ENCODE measurements at regions of chr18 and their contacts with region 1.

Region 1: DNA sequence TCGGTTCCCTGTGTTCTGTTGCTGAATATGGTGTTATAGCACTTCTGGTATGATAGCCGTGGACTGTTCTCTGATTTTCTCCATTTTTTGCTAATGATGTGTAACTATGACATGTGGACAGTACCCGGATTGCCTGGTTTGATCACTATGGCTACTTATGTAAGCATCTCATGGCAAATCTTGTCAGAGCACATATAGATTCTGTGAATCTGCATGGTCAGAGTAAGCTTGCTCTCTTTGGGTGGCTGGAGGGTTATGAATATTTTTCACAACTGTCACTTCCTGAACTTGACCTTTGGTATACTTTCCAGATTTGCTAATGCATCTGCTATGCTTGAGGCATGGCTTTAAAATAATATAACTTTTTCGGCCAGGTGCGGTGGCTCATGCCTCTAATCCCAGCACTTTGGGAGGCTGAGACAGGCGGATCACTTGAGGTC is 36.8 kb upstream of the ATP8B1 start:
- DNase-seq: peak; percentile 65
- H3K4me3 ChIP-seq: no peak overlapping the region
- H3K27ac ChIP-seq: no peak overlapping the region
- H3K4me1 ChIP-seq: peaks cover 6% of the 10 kb centered on the region
- H3K27me3 ChIP-seq: no peaks in the 10 kb centered on the region
- CTCF ChIP-seq: no peak

Region 2: DNA sequence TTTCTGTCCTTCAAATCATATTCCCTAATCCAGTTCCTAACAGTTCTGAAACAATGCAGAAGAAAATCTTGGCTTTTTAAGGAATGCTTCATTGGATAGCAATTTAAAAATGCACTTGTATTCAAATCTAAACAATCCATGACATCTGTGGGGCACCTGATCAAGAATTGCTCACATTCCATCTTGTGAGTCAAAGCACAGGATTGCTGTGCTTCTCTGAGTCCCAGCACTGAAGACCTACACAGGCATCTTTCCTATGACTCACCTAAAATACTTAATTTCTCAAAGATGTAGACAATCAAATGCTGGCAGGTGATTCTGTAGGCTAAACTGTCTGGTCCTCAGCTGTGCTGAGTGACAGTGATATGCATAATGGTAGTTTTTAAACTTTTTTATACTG is 26.7 kb before region 1 on chr18:
- CTCF ChIA-PET with region 1: no interaction called
- dilution Hi-C with region 1: no loop called
- in situ Hi-C with region 1: no loop called
- intact Hi-C with region 1: loop called (anchors 1 kb)
- DNase-seq: peak; percentile 86
- H3K4me3 ChIP-seq: no peak overlapping the region
- H3K27ac ChIP-seq: no peak overlapping the region
- H3K4me1 ChIP-seq: peaks cover 24% of the 10 kb centered on the region
- H3K27me3 ChIP-seq: no peaks in the 10 kb centered on the region
- CTCF ChIP-seq: no peak

Region 3: DNA sequence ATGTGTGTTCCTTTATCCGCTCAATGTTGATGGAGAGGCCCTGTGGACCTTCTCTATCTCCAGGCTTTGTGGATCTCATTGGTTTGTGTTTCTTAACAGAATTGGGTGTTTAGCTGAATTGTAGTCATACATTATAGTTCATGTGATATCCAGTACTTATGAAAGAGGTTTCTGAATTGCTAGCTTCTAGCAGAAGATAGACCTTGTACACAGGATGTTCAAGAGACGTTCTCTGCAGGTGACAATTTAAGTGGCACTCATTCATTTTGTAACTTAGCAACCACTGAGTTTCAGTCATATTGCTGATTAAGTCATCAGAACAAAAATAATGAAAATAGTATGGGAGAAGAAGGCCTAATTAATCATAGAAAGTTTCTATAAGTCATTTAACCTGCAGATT is 509.7 kb after region 1 on chr18:
- CTCF ChIA-PET with region 1: no interaction called
- dilution Hi-C with region 1: no loop called
- in situ Hi-C with region 1: no loop called
- intact Hi-C with region 1: no loop called
- DNase-seq: no peak
- H3K4me3 ChIP-seq: no peak overlapping the region
- H3K27ac ChIP-seq: no peak overlapping the region
- H3K4me1 ChIP-seq: peaks cover 9% of the 10 kb centered on the region
- H3K27me3 ChIP-seq: no peaks in the 10 kb centered on the region
- CTCF ChIP-seq: no peak

Measured in mammary epithelial cell (primary cell).